WTC11 (cell line): ENCODE measurements at regions of chr1 and their contacts with region 1.

Region 1: GRCh38 chr1:178501705-178502329 is 5.1 kb upstream of the CLEC20A start:
- DNase-seq: peak; percentile 92
- ATAC-seq: peak; percentile 85
- H3K4me3 Mint-ChIP-seq: no peak overlapping the region
- H3K27ac Mint-ChIP-seq: no peak overlapping the region
- H3K4me1 Mint-ChIP-seq: peaks cover 13% of the 10 kb centered on the region
- H3K27me3 Mint-ChIP-seq: no peaks in the 10 kb centered on the region
- CTCF ChIP-seq: peak; percentile 97

Region 2: GRCh38 chr1:178031856-178032320 is 469.9 kb before region 1 on chr1:
- CTCF ChIA-PET with region 1: interaction called, 14 read pairs
- POLR2A ChIA-PET with region 1: no interaction called
- DNase-seq: peak; percentile 80
- ATAC-seq: peak; percentile 96
- H3K4me3 Mint-ChIP-seq: no peak overlapping the region
- H3K27ac Mint-ChIP-seq: no peak overlapping the region
- H3K4me1 Mint-ChIP-seq: peaks cover 12% of the 10 kb centered on the region
- H3K27me3 Mint-ChIP-seq: no peaks in the 10 kb centered on the region
- CTCF ChIP-seq: peak; percentile 84

Region 3: DNA sequence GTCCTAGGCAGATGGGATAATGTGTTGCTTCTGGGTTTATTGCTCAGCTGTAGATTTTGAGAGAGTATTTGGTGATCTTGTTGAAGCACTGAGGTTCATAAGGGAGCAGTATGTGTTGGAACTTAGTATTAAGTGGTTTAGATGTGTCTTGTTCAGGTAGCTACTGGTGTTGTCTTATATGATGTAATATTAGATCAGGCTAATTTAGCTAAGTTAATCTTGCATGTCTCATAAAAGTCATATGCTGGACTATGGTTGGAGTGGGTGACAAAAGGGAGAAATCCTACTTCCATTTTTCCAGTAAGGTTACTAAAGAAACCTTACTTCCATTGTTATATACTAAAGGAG is 201.5 kb before region 1 on chr1:
- CTCF ChIA-PET with region 1: interaction called, 42 read pairs
- POLR2A ChIA-PET with region 1: no interaction called
- DNase-seq: no peak
- ATAC-seq: no peak
- H3K4me3 Mint-ChIP-seq: no peak overlapping the region
- H3K27ac Mint-ChIP-seq: peak overlapping the region; percentile 87; the same call in 1 of the 2 replicates
- H3K4me1 Mint-ChIP-seq: peaks cover 28% of the 10 kb centered on the region
- H3K27me3 Mint-ChIP-seq: no peaks in the 10 kb centered on the region
- CTCF ChIP-seq: no peak

Region 4: GRCh38 chr1:178344513-178345082 is 157.2 kb before region 1 on chr1:
- CTCF ChIA-PET with region 1: interaction called, 12 read pairs
- POLR2A ChIA-PET with region 1: interaction called, 3 read pairs
- DNase-seq: no peak
- ATAC-seq: peak; percentile 62
- H3K4me3 Mint-ChIP-seq: peak overlapping the region; percentile 42
- H3K27ac Mint-ChIP-seq: peak overlapping the region; percentile 76
- H3K4me1 Mint-ChIP-seq: peaks cover 54% of the 10 kb centered on the region
- H3K27me3 Mint-ChIP-seq: no peaks in the 10 kb centered on the region
- CTCF ChIP-seq: 0 out of 2 replicates have a peak, but pooled peaks have one; percentile 19

Region 5: GRCh38 chr1:178438432-178438831 is 63.4 kb before region 1 on chr1:
- CTCF ChIA-PET with region 1: interaction called, 20 read pairs
- POLR2A ChIA-PET with region 1: no interaction called
- DNase-seq: no peak
- ATAC-seq: no peak
- H3K4me3 Mint-ChIP-seq: no peak overlapping the region
- H3K27ac Mint-ChIP-seq: peak overlapping the region; percentile 62; the same call in 1 of the 2 replicates
- H3K4me1 Mint-ChIP-seq: peaks cover 15% of the 10 kb centered on the region
- H3K27me3 Mint-ChIP-seq: no peaks in the 10 kb centered on the region
- CTCF ChIP-seq: no peak

Region 6: DNA sequence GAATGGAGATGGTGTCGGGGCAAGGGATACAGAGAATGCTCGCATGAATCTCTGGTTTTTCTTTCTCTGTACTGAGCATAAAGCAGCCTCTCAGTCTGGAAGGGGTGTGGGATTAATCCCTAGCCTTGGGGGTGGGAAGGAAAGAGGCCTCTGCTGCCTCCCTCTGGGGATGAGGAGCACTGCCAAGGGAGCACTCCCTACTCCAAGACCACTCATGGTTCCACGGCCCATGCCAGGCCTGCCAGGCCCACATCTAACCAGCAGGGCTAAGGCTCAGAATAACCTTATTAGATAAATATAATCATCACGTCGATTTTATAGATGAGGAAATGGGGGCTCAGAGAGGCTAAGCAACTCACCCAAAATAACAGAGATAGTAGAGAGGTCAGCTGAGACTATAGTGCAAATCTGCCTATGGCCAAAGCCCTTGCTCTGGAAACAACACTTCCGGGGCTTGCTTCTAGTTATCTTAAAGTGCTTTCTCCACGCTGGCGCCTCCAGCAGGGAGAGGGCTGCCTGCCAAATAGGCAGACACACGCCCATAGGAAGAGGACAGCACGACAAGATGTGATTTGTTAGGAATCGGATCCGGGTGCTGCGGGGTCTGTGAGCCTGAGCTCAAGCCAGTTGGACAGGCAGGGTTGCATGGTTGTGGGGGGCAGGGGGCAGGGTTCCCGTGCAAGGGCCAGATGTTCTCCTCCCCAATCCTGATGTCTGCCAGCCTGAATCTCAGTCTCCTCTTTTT is 11.6 kb after region 1 on chr1:
- CTCF ChIA-PET with region 1: interaction called, 54 read pairs
- POLR2A ChIA-PET with region 1: no interaction called
- DNase-seq: peak; percentile 33
- ATAC-seq: peak; percentile 74
- H3K4me3 Mint-ChIP-seq: no peak overlapping the region
- H3K27ac Mint-ChIP-seq: no peak overlapping the region
- H3K4me1 Mint-ChIP-seq: no peaks in the 10 kb centered on the region; the same call in 1 of the 2 replicates
- H3K27me3 Mint-ChIP-seq: no peaks in the 10 kb centered on the region
- CTCF ChIP-seq: no peak